Panc1 (cell line): ENCODE measurements at regions of chr3 and their contacts with region 1.

Region 1: GRCh38 chr3:186946756-186947375 is 16.5 kb downstream of the ST6GAL1 start:
- DNase-seq: no peak
- ATAC-seq: no peak
- H3K4me3 ChIP-seq: no peak overlapping the region
- H3K27ac ChIP-seq: no peak overlapping the region
- H3K4me1 ChIP-seq: no peaks in the 10 kb centered on the region
- H3K27me3 ChIP-seq: no peaks in the 10 kb centered on the region
- CTCF ChIP-seq: no peak

Region 2: GRCh38 chr3:186849374-186849975 is 97.4 kb before region 1 on chr3:
- CTCF ChIA-PET with region 1: interaction called, 14 read pairs
- POLR2A ChIA-PET with region 1: no interaction called
- in situ Hi-C with region 1: no loop called
- intact Hi-C with region 1: no loop called
- DNase-seq: peak; percentile 36
- ATAC-seq: peak; percentile 83
- H3K4me3 ChIP-seq: no peak overlapping the region
- H3K27ac ChIP-seq: no peak overlapping the region
- H3K4me1 ChIP-seq: no peaks in the 10 kb centered on the region
- H3K27me3 ChIP-seq: peaks cover 23% of the 10 kb centered on the region
- CTCF ChIP-seq: peak; percentile 67; the same call in 1 of the 2 replicates

Region 3: GRCh38 chr3:186871403-186871924 is 75.4 kb before region 1 on chr3:
- CTCF ChIA-PET with region 1: no interaction called
- POLR2A ChIA-PET with region 1: no interaction called
- in situ Hi-C with region 1: no loop called
- intact Hi-C with region 1: no loop called
- DNase-seq: no peak
- ATAC-seq: no peak
- H3K4me3 ChIP-seq: no peak overlapping the region
- H3K27ac ChIP-seq: no peak overlapping the region
- H3K4me1 ChIP-seq: no peaks in the 10 kb centered on the region
- H3K27me3 ChIP-seq: no peaks in the 10 kb centered on the region
- CTCF ChIP-seq: no peak

Region 4: DNA sequence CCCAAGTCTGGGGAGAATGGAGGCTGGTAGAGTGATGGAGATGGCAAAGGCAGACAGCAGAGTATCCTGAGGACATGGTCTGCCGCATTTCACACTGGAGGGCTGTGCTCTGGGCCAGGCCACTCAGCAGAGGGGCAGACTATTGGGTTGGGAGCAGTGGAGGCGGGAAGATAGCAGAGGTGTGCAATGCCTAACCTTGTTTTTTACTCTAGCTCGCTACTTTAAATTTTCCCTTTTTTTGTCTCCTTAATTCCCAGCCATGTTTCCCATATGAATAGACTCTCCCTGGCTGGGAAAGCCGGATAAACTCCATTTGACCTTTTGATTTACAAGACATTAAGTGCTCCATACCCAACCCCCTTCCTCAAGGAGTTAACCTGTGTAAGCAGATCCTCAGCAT is 50.0 kb before region 1 on chr3:
- CTCF ChIA-PET with region 1: no interaction called
- POLR2A ChIA-PET with region 1: no interaction called
- in situ Hi-C with region 1: no loop called
- intact Hi-C with region 1: no loop called
- DNase-seq: no peak
- ATAC-seq: no peak
- H3K4me3 ChIP-seq: no peak overlapping the region
- H3K27ac ChIP-seq: no peak overlapping the region
- H3K4me1 ChIP-seq: no peaks in the 10 kb centered on the region
- H3K27me3 ChIP-seq: no peaks in the 10 kb centered on the region
- CTCF ChIP-seq: no peak

Region 5: GRCh38 chr3:187648177-187648576 is 701.3 kb after region 1 on chr3:
- CTCF ChIA-PET with region 1: no interaction called
- POLR2A ChIA-PET with region 1: no interaction called
- in situ Hi-C with region 1: no loop called
- intact Hi-C with region 1: no loop called
- DNase-seq: no peak
- ATAC-seq: no peak
- H3K4me3 ChIP-seq: no peak overlapping the region
- H3K27ac ChIP-seq: no peak overlapping the region
- H3K4me1 ChIP-seq: no peaks in the 10 kb centered on the region
- H3K27me3 ChIP-seq: peaks cover 2% of the 10 kb centered on the region; the same call in 1 of the 2 replicates
- CTCF ChIP-seq: no peak

Region 6: GRCh38 chr3:187745201-187746058 is 798.6 kb after region 1 on chr3 and contains the start of gene BCL6:
- CTCF ChIA-PET with region 1: no interaction called
- POLR2A ChIA-PET with region 1: no interaction called
- in situ Hi-C with region 1: no loop called
- intact Hi-C with region 1: no loop called
- DNase-seq: peak; percentile 91
- ATAC-seq: peak; percentile 75
- H3K4me3 ChIP-seq: peak within 1 kb of the TSS; percentile 60 to 94
- H3K27ac ChIP-seq: peak within 1 kb of the TSS; percentile 100
- H3K4me1 ChIP-seq: peaks cover 54% of the 10 kb centered on the region
- H3K27me3 ChIP-seq: no peaks in the 10 kb centered on the region
- CTCF ChIP-seq: no peak
- total RNA-seq, gene BCL6: 21.5 TPM